Activated CD4-positive, alpha-beta T cell treated with anti-CD3 and anti-CD28 coated beads for 36 hours (primary cell): ENCODE measurements at regions of chr3 and their contacts with region 1.

Region 1: DNA sequence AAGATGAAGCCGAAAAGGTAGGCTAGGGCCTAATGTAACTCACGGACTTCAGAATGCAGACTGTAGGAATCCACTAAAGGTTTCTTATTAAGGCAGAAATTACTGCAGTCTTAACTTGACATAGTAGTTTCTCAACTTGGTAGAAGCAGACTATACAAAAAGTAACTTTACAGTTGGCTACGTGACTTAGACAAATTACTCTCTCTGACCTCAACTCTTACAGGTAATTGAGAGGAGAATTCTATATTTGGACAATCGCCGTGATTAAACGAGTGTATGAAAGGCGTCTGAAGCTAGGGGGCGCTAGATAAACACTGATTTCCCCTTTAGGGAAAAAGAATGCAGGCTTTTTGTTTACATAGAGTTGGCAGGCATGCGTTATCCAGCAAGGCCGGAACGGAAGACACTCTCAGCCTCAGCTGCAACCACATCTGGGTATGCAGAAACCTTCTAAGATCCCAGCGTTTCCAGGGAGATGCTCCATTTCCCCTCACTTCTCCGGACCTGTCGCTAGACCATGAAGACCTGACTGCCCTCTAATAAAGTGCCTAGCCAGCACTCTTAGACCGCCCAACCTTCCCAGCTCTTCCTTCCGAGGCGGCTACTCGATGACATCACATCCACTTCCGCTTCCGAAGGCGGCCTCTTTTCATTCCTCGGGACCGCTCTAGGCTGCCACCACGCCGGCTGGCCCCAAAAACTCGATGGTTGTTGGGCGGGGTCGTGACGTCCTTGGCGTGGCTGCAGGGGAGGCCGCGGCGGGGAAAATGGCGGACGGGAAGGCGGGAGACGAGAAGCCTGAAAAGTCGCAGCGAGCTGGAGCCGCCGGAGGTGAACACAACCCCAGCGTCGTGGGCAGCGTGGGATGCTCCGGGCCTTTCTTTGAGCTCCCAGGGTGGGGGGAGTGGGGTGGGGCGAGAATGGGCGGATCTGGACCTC is at the start of gene PCNP:
- DNase-seq: peak; percentile 100
- ATAC-seq: peak; percentile 78
- H3K4me3 Mint-ChIP-seq: peak within 1 kb of the TSS; percentile 85
- H3K27ac Mint-ChIP-seq: peak within 1 kb of the TSS; percentile 94
- H3K4me1 Mint-ChIP-seq: peaks cover 60% of the 10 kb centered on the region
- H3K27me3 Mint-ChIP-seq: no peaks in the 10 kb centered on the region
- total RNA-seq, gene PCNP: 213 to 264 TPM

Region 2: DNA sequence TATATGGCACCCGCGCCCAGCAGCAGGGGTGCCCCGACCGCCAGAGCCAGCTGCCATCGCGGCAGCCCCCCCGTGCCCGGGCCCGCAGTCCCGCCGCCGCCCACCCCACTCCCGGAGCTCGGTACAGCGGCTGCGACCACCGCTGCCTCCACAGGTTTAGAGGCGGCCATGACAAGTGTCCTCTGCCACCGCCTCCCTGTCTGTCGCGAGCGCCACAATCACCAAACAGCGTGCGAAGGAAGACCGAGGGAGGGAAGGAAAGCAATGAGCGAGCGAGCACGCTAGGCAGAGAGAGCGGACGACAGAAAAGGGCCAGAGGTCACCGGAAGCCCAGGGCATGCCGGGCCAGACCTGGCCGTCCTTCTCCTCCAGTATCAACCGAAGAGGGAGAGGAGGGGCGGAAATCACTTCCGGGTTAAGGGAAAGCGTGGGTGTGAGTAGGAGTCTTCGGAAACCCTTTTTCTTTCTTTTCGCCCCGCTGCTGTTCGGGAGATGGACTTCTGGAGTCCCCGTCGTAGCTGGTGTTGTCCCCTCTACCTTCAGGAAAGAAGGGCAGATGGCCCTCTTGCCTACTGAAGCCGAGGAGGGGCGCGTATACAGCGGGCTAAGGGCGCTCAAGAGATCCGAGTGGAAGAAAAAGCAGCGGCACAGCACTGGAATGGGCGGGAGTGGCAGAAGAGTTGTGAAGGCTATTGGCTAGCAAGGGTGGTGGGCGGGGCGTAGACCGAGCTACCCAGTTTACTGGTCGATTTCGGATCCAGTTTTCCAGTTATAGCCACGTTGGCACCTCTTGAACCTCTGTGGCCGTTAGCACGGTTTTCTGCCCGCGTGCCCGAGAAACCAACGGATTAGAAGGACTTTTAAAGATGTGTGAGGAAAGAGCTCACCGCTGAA is 1172.7 kb before region 1 on chr3 and contains the starts of genes LNP1 and TOMM70:
- CTCF ChIA-PET with region 1: no interaction called
- POLR2A ChIA-PET with region 1: no interaction called
- intact Hi-C with region 1: loop called in 1 of 2 experiments (anchors 1 kb)
- DNase-seq: peak; percentile 98
- ATAC-seq: peak; percentile 91
- H3K4me3 Mint-ChIP-seq: peak within 1 kb of the TSS; percentile 78
- H3K27ac Mint-ChIP-seq: peak within 1 kb of the TSS; percentile 96
- H3K4me1 Mint-ChIP-seq: peaks cover 51% of the 10 kb centered on the region
- H3K27me3 Mint-ChIP-seq: no peaks in the 10 kb centered on the region
- total RNA-seq, gene LNP1: 1.7 TPM
- total RNA-seq, gene TOMM70: 54.0 to 54.1 TPM

Region 3: DNA sequence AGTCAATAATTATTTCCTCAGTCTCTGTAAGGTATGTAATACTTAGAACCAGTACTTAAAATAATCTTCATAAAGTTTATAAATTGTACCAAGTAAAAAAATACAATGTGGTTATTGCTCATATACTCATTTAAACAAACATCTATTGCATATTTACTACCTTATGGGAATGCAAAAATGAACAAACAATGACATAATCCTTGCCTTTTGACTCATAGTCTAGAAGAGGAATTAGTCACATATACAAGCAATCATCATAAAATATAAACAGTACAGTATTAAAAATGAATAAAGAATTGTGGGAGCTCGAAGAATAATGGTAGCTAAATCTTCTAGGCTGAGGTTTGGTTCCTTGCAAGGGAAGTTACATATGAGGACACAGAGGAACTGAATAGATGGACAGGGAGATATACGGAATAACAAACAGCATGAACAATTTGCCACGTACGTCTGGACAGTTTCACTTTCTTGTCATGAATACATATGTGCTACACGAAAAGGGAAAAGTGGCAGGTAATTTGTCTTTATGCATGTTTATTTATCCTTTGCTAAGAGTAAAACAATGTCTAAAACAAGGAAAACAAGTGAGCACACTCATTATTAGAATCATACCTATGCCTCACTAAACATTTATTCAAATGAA is 270.5 kb before region 1 on chr3:
- CTCF ChIA-PET with region 1: no interaction called
- POLR2A ChIA-PET with region 1: no interaction called
- intact Hi-C with region 1: no loop called
- DNase-seq: no peak
- ATAC-seq: no peak
- H3K4me3 Mint-ChIP-seq: no peak overlapping the region
- H3K27ac Mint-ChIP-seq: no peak overlapping the region
- H3K4me1 Mint-ChIP-seq: no peaks in the 10 kb centered on the region
- H3K27me3 Mint-ChIP-seq: no peaks in the 10 kb centered on the region

Region 4: DNA sequence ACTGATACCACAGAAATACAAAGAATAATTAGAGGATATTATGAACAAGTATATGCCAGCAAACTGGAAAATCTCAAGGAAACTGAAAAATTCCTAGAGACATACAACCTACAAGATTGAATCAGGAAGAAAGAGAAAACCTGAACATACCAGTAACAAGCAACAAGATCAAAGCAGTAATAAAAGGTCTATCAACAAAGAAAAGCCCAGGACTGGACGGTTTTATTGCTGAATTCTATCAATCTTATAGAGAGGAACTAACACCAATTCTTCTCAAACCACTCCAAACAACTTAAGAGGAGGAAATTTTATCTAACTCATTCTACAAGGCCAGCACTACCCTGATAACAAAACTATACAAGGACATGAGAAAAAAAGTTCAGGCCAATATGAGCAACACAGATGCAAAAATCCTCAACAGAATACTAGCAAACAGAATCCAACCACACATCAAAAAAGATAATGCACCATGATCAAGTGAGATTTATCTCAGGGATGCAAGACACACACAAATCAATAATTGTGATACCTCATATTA is 182.2 kb before region 1 on chr3:
- CTCF ChIA-PET with region 1: interaction called, 4 read pairs
- POLR2A ChIA-PET with region 1: no interaction called
- intact Hi-C with region 1: loop called (anchors 1 to 5 kb)
- DNase-seq: no peak
- ATAC-seq: no peak
- H3K4me3 Mint-ChIP-seq: no peak overlapping the region
- H3K27ac Mint-ChIP-seq: peak overlapping the region; percentile 35
- H3K4me1 Mint-ChIP-seq: peaks cover 36% of the 10 kb centered on the region
- H3K27me3 Mint-ChIP-seq: no peaks in the 10 kb centered on the region

Region 5: DNA sequence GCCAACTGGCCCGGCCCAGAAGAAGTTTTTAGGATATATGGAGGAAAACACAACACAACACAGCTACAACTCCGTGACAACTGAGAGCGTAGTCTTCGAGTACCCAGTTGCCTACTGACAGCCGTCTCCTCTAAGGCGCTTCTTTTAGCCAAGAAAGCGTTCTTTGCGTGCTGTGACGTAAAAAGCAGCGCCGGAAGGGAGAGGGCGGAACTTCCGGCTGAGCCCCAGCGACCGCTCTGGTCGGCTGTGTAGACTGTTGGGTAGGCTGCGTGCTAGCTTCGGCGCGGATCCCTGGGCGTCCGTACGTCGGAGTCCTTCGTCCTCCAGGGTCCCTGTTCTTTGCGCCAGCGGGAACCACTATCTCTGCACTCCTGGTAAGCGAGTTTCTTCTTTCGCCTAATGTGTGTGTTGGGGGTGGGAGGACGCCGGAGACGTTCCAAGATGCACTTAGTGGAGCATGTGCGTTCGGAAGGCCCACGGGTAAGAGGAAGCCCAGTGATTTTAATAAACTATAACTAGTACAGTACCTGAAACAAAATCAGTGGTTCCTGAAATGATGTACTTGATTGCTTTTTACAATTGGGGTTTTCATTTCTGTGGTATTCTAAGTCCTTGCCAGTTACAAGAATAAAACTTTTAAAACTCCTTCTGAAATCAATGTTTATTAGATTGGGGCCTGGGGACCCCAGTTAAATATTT is 11.9 kb before region 1 on chr3 and contains the start of gene TRMT10C:
- CTCF ChIA-PET with region 1: interaction called, 15 read pairs
- POLR2A ChIA-PET with region 1: interaction called, 22 read pairs
- intact Hi-C with region 1: loop called (anchors 1 kb)
- DNase-seq: peak; percentile 96
- ATAC-seq: peak; percentile 98
- H3K4me3 Mint-ChIP-seq: peak within 1 kb of the TSS; percentile 93
- H3K27ac Mint-ChIP-seq: peak within 1 kb of the TSS; percentile 96
- H3K4me1 Mint-ChIP-seq: peaks cover 42% of the 10 kb centered on the region
- H3K27me3 Mint-ChIP-seq: peaks cover 4% of the 10 kb centered on the region
- total RNA-seq, gene TRMT10C: 54.3 to 55.4 TPM

Region 6: GRCh38 chr3:101676765-101677435 is 103.2 kb after region 1 on chr3 and contains the start of gene ZBTB11:
- CTCF ChIA-PET with region 1: interaction called, 20 read pairs
- POLR2A ChIA-PET with region 1: interaction called, 6 read pairs
- intact Hi-C with region 1: loop called (anchors 1 kb)
- DNase-seq: peak; percentile 100
- ATAC-seq: peak; percentile 78
- H3K4me3 Mint-ChIP-seq: peak within 1 kb of the TSS; percentile 94
- H3K27ac Mint-ChIP-seq: peak within 1 kb of the TSS; percentile 92
- H3K4me1 Mint-ChIP-seq: peaks cover 52% of the 10 kb centered on the region
- H3K27me3 Mint-ChIP-seq: no peaks in the 10 kb centered on the region
- total RNA-seq, gene ZBTB11: 25.1 to 26.0 TPM

Region 7: GRCh38 chr3:101779047-101779821 is 205.5 kb after region 1 on chr3 and contains the start of gene NXPE3:
- CTCF ChIA-PET with region 1: no interaction called
- POLR2A ChIA-PET with region 1: no interaction called
- intact Hi-C with region 1: loop called in 1 of 2 experiments (anchors 1 kb)
- DNase-seq: peak; percentile 97
- ATAC-seq: peak; percentile 92
- H3K4me3 Mint-ChIP-seq: peak within 1 kb of the TSS; percentile 91
- H3K27ac Mint-ChIP-seq: peak within 1 kb of the TSS; percentile 96
- H3K4me1 Mint-ChIP-seq: peaks cover 49% of the 10 kb centered on the region
- H3K27me3 Mint-ChIP-seq: no peaks in the 10 kb centered on the region
- total RNA-seq, gene NXPE3: 12.8 to 18.5 TPM

Region 8: GRCh38 chr3:103052236-103052830 is 1478.6 kb after region 1 on chr3:
- CTCF ChIA-PET with region 1: no interaction called
- POLR2A ChIA-PET with region 1: no interaction called
- intact Hi-C with region 1: no loop called
- DNase-seq: no peak
- ATAC-seq: no peak
- H3K4me3 Mint-ChIP-seq: no peak overlapping the region
- H3K27ac Mint-ChIP-seq: no peak overlapping the region
- H3K4me1 Mint-ChIP-seq: no peaks in the 10 kb centered on the region
- H3K27me3 Mint-ChIP-seq: no peaks in the 10 kb centered on the region